Activated CD4-positive, alpha-beta memory T cell treated with anti-CD3 and anti-CD28 coated beads, Interleukin-2, amount 10 ng/mL, durations not matched to agents 7 days and 5 days (primary cell): ENCODE measurements at regions of chr11 and their contacts with region 1.

Region 1: DNA sequence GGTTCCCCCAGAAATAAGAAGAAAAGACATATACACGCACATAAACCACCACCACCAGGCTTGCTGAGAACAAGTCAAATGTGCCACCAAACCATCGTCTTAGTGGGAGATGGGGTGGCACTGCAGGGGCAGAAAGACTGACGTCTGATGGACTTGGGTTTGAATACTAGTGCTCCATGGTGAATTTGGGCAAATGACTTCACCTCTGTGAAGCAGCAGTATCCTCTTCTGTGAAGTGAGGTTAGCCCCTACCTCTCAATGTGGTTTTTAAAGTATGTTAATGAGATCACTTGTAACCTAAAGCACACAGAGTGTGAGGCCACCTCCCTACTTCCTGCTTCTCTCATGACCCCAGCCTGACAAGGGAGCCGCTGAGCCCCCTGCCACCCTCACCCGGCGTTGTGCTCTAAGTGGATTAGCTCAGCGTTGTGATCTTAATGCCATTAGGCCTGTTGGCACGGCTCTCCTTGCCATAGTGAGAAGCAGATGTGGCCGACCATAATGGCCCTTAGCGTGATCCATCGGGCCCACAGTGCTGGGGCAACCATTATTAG is 14.4 kb downstream of the ZBTB16 start:
- DNase-seq: no peak
- H3K4me3 Mint-ChIP-seq: no peak overlapping the region
- H3K27ac Mint-ChIP-seq: peak overlapping the region; percentile 84
- H3K4me1 Mint-ChIP-seq: peaks cover 60% of the 10 kb centered on the region
- H3K27me3 Mint-ChIP-seq: peaks cover 8% of the 10 kb centered on the region

Region 2: GRCh38 chr11:114059278-114059983 is 14.5 kb before region 1 on chr11 and contains the start of gene ZBTB16:
- CTCF ChIA-PET with region 1: interaction called, 9 read pairs
- POLR2A ChIA-PET with region 1: interaction called, 28 read pairs
- DNase-seq: peak; percentile 63
- H3K4me3 Mint-ChIP-seq: peak within 1 kb of the TSS; percentile 81
- H3K27ac Mint-ChIP-seq: peak within 1 kb of the TSS; percentile 62
- H3K4me1 Mint-ChIP-seq: peaks cover 20% of the 10 kb centered on the region
- H3K27me3 Mint-ChIP-seq: peaks cover 64% of the 10 kb centered on the region
- total RNA-seq, gene ZBTB16: 11.0 to 11.8 TPM